Activated B cell treated with CpG ODN at 0.5 μM for 24 hours (primary cell): ENCODE measurements at regions of chr12 and their contacts with region 1.

Region 1: DNA sequence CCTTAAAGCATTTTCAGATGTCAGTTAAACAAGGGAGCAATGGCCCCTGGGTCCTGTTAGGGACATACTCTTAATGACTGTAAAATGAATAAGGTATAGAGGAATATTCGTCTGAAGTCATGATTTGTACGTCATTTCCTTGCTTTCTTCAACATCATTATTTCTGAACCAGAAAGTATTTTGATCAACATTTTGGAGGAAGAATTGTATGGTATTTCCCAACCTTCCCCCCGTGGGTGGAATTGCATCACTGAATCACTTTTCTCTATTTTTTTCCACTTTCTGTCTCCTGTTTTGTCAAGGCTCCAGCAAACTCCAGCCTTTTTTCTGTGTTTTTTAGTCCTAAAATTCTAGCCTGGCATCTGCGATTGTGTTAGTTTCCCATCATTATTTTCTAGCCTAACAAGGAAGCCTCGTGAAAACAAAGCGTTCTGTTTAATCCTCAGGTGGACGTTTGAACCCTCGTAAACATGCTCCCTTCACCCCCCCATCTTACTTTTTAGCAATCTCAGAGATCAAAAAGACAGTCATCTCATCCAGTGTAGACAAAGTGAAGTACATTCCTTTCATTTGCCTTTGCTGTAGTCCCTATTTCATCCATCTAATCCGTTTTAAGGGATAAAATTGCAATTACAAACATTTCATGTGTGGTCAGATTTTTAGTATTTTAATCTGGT is 62.3 kb downstream of the ETV6 start:
- DNase-seq: no peak
- ATAC-seq: no peak
- H3K4me3 Mint-ChIP-seq: no peak overlapping the region
- H3K27ac Mint-ChIP-seq: no peak overlapping the region
- H3K4me1 Mint-ChIP-seq: peaks cover 35% of the 10 kb centered on the region
- H3K27me3 Mint-ChIP-seq: no peaks in the 10 kb centered on the region
- CTCF ChIP-seq: no peak

Region 2: GRCh38 chr12:11228296-11228879 is 483.4 kb before region 1 on chr12:
- CTCF ChIA-PET with region 1: no interaction called
- POLR2A ChIA-PET with region 1: no interaction called
- intact Hi-C with region 1: no loop called
- DNase-seq: no peak
- ATAC-seq: no peak
- H3K4me3 Mint-ChIP-seq: no peak overlapping the region
- H3K27ac Mint-ChIP-seq: no peak overlapping the region
- H3K4me1 Mint-ChIP-seq: no peaks in the 10 kb centered on the region
- H3K27me3 Mint-ChIP-seq: no peaks in the 10 kb centered on the region
- CTCF ChIP-seq: no peak

Region 3: DNA sequence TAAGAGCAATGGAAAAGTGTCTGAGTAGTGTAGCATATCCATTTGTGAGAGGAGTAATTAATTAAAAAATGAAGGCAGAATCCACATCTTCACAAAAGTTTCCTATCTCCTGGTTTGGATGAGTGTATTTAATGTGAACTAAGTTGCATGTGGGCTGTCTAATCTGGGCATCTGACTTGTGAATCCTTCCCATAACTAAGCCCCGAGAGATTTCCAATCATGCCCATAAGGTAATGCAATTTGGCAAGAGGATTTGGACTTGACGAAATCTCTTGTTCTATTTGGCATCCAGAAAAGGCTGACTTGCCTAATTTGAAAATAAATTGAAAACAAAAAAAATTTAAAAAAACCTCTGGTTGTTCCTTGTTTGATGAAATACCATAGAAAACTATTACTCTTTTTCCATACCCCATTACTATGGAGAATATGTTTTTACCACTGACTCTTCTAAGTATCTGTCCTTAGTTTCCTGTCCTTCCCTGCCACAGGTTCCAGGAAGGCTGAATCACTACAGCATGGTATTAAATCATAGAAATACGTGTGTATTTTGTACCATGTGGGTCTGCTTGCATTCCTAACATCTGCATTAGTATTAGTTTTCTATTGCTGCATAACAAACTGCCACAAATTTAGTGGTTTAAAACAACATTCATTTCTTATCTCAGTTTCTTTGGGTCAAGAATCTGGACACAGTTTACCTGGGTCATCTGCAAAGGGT is 14.0 kb before region 1 on chr12:
- CTCF ChIA-PET with region 1: no interaction called
- POLR2A ChIA-PET with region 1: no interaction called
- intact Hi-C with region 1: loop called (anchors 2 kb)
- DNase-seq: no peak
- ATAC-seq: no peak
- H3K4me3 Mint-ChIP-seq: no peak overlapping the region
- H3K27ac Mint-ChIP-seq: no peak overlapping the region
- H3K4me1 Mint-ChIP-seq: peaks cover 16% of the 10 kb centered on the region
- H3K27me3 Mint-ChIP-seq: no peaks in the 10 kb centered on the region
- CTCF ChIP-seq: no peak